ENCODE measurements at regions of chr2 and their contacts with region 1.

Region 1: DNA sequence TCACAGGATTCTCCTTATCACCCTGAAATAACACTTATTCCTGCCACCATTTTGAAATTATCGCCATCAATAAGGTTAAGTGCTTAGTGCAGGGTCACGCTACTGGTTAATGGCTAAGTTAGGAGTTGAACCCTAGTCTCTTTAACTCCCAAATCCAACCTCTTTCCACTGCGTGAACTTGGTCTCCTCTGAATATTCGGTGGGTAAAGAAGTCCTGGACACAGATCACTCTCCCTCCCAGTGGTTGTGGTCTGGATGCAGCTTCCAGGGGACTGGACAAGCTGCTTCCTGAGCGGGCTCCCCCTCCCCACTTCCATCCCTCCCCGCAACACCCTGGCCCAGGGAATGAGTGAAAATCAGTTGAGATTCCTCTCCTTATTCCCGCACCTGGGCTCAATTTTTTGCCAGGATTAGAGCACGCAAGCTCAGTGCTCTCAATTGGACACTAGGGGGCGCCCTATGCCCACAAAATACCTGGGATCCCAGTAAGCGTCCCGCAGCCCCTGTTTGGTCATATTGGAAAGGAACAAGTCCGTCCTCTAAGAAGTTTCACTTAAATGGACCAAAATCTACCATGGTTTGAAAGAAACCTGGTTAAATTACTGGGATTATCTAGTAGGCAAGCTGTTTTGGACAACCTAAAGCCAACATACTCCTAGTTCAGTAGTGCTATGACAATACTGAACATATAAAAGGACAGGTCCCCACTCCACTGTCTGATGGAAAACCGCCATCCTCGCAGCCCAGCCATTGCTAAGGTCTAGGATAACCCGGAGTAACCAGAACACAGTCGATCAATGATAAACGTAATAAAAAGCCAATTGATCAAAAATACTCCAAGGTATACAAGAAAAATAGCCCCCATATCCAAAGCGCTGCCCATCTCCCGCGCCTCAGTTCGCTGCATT is 40.4 kb downstream of the DHRS9 start:
- DNase-seq: peak; percentile 45 to 77 (median 60)
- ATAC-seq: peak; percentile 62
- H3K4me3 ChIP-seq: no peak overlapping the region
- H3K4me3 Mint-ChIP-seq: no peak overlapping the region
- H3K27ac ChIP-seq: no peak overlapping the region
- H3K27ac Mint-ChIP-seq: peak overlapping the region in 1 of 9 donors; percentile 34
- H3K4me1 ChIP-seq: peaks cover 45 to 48% of the 10 kb centered on the region in 2 donors
- H3K4me1 Mint-ChIP-seq: peaks cover 36 to 56% (median 46%) of the 10 kb centered on the region in 7 donors
- H3K27me3 ChIP-seq: no peaks in the 10 kb centered on the region
- H3K27me3 Mint-ChIP-seq: peaks cover 0 to 6% (median 0%) of the 10 kb centered on the region in 5 donors

Region 2: GRCh38 chr2:168961450-168962229 is 148.1 kb before region 1 on chr2:
- CTCF ChIA-PET with region 1: interaction called, 10 read pairs
- POLR2A ChIA-PET with region 1: no interaction called
- intact Hi-C with region 1: loop called (anchors 1 kb)
- DNase-seq: peak in 7 of 9 donors; percentile 20 to 60 (median 56)
- ATAC-seq: peak; percentile 91
- H3K4me3 ChIP-seq: no peak overlapping the region
- H3K4me3 Mint-ChIP-seq: no peak overlapping the region
- H3K27ac ChIP-seq: no peak overlapping the region
- H3K27ac Mint-ChIP-seq: no peak overlapping the region
- H3K4me1 ChIP-seq: peaks cover 14 to 32% of the 10 kb centered on the region in 2 donors
- H3K4me1 Mint-ChIP-seq: peaks cover 6 to 25% (median 20%) of the 10 kb centered on the region in 7 donors
- H3K27me3 ChIP-seq: no peaks in the 10 kb centered on the region
- H3K27me3 Mint-ChIP-seq: peaks cover 0 to 13% (median 10%) of the 10 kb centered on the region in 5 donors

Region 3: GRCh38 chr2:169072163-169072925 is 37.4 kb before region 1 on chr2:
- CTCF ChIA-PET with region 1: no interaction called
- POLR2A ChIA-PET with region 1: no interaction called
- intact Hi-C with region 1: loop called in 1 of 2 experiments (anchors 2 kb)
- DNase-seq: no peak
- ATAC-seq: peak; percentile 66
- H3K4me3 ChIP-seq: no peak overlapping the region
- H3K4me3 Mint-ChIP-seq: peak overlapping the region in 1 of 10 donors; percentile 37
- H3K27ac ChIP-seq: no peak overlapping the region
- H3K27ac Mint-ChIP-seq: peak overlapping the region in 1 of 9 donors; percentile 6
- H3K4me1 ChIP-seq: no peaks in the 10 kb centered on the region
- H3K4me1 Mint-ChIP-seq: peaks cover 0 to 36% (median 8%) of the 10 kb centered on the region in 7 donors
- H3K27me3 ChIP-seq: no peaks in the 10 kb centered on the region
- H3K27me3 Mint-ChIP-seq: peaks cover 0 to 7% (median 0%) of the 10 kb centered on the region in 5 donors

Region 4: GRCh38 chr2:169141713-169142352 is 32.1 kb after region 1 on chr2:
- CTCF ChIA-PET with region 1: interaction called, 85 read pairs
- POLR2A ChIA-PET with region 1: no interaction called
- intact Hi-C with region 1: loop called (anchors 1 kb)
- DNase-seq: peak; percentile 21 to 65 (median 49)
- ATAC-seq: peak; percentile 73
- H3K4me3 ChIP-seq: no peak overlapping the region
- H3K4me3 Mint-ChIP-seq: no peak overlapping the region
- H3K27ac ChIP-seq: no peak overlapping the region
- H3K27ac Mint-ChIP-seq: no peak overlapping the region
- H3K4me1 ChIP-seq: no peaks in the 10 kb centered on the region
- H3K4me1 Mint-ChIP-seq: peaks cover 0 to 1% (median 0%) of the 10 kb centered on the region in 7 donors
- H3K27me3 ChIP-seq: no peaks in the 10 kb centered on the region
- H3K27me3 Mint-ChIP-seq: peaks cover 0 to 3% (median 0%) of the 10 kb centered on the region in 5 donors

Region 5: DNA sequence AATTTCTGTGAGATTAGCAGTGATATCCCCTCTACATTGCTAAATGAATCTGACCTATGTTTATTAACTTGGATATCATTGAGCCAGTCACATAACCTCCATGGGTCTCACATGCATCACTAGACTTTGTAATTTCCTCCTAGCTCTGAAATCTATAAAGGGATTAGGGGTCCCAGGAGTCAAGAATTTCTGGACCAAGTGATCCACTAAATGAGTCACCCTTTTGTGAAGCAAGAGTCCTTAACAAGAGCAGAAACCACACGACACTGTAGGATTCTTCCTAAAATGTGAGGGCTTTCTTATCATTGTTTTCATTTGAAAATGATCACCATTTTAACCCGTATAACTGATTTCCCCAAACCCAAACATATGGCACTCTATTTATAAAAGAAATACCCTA is 49.9 kb after region 1 on chr2:
- CTCF ChIA-PET with region 1: no interaction called
- POLR2A ChIA-PET with region 1: no interaction called
- intact Hi-C with region 1: no loop called
- DNase-seq: no peak
- ATAC-seq: no peak
- H3K4me3 ChIP-seq: no peak overlapping the region
- H3K4me3 Mint-ChIP-seq: no peak overlapping the region
- H3K27ac ChIP-seq: no peak overlapping the region
- H3K27ac Mint-ChIP-seq: no peak overlapping the region
- H3K4me1 ChIP-seq: no peaks in the 10 kb centered on the region
- H3K4me1 Mint-ChIP-seq: peaks cover 0 to 3% (median 0%) of the 10 kb centered on the region in 7 donors
- H3K27me3 ChIP-seq: no peaks in the 10 kb centered on the region
- H3K27me3 Mint-ChIP-seq: peaks cover 4 to 21% (median 6%) of the 10 kb centered on the region in 5 donors

Region 6: GRCh38 chr2:169363560-169364150 is 253.9 kb after region 1 on chr2:
- CTCF ChIA-PET with region 1: no interaction called
- POLR2A ChIA-PET with region 1: no interaction called
- intact Hi-C with region 1: loop called in 1 of 2 experiments (anchors 5 kb)
- DNase-seq: peak in 8 of 9 donors; percentile 14 to 49 (median 38)
- ATAC-seq: peak; percentile 58
- H3K4me3 ChIP-seq: peak overlapping the region; percentile 89
- H3K4me3 Mint-ChIP-seq: peak overlapping the region; percentile 87 to 98 (median 94)
- H3K27ac ChIP-seq: no peak overlapping the region
- H3K27ac Mint-ChIP-seq: peak overlapping the region in 4 of 9 donors; percentile 14 to 88 (median 55)
- H3K4me1 ChIP-seq: peaks cover 11 to 18% of the 10 kb centered on the region in 2 donors
- H3K4me1 Mint-ChIP-seq: peaks cover 17 to 37% (median 29%) of the 10 kb centered on the region in 7 donors
- H3K27me3 ChIP-seq: peaks cover 4 to 15% of the 10 kb centered on the region in 2 donors
- H3K27me3 Mint-ChIP-seq: peaks cover 42 to 60% (median 49%) of the 10 kb centered on the region in 5 donors

Region 7: DNA sequence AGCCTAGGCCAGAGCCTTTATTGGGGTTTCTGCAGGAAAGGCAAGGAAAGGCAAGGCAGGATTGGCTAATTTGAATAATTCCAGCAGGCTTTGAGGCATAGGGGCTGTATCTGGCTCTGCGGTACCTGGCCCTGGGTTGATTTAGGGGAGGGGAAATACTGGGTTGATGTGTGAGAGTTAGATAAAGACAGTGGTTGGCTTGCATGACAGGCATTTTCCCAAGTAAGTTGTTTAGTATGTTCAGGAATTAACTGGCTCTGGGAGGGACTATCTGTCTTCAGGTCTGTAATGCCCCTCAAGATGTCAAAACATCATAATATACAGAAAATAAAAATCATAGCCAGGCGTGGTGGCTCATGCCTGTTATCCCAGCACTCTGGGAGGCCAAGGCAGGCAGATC is 816.2 kb after region 1 on chr2:
- CTCF ChIA-PET with region 1: no interaction called
- POLR2A ChIA-PET with region 1: no interaction called
- intact Hi-C with region 1: loop called in 1 of 2 experiments (anchors 2 kb)
- DNase-seq: no peak
- ATAC-seq: no peak
- H3K4me3 ChIP-seq: no peak overlapping the region
- H3K4me3 Mint-ChIP-seq: no peak overlapping the region
- H3K27ac ChIP-seq: peak overlapping the region; percentile 27
- H3K27ac Mint-ChIP-seq: peak overlapping the region in 4 of 9 donors; percentile 5 to 55 (median 32)
- H3K4me1 ChIP-seq: no peaks in the 10 kb centered on the region
- H3K4me1 Mint-ChIP-seq: no peaks in the 10 kb centered on the region
- H3K27me3 ChIP-seq: no peaks in the 10 kb centered on the region
- H3K27me3 Mint-ChIP-seq: no peaks in the 10 kb centered on the region

Measured in naive thymus-derived CD4-positive, alpha-beta T cell (primary cell).